Dorsolateral prefrontal cortex (tissue), 120 donors: ENCODE measurements at regions of chr1 and their contacts with region 1.

Region 1: GRCh38 chr1:223755992-223756775 is 43.8 kb downstream of the CAPN2 start:
- DNase-seq: peak in 9 of 10 donors; percentile 69 to 87 (median 81)
- H3K4me3 ChIP-seq: no peak overlapping the region
- H3K27ac ChIP-seq: peak overlapping the region; percentile 51 to 96 (median 87)
- H3K27me3 ChIP-seq: no peaks in the 10 kb centered on the region
- CTCF ChIP-seq: peak; percentile 17 to 89 (median 66)

Region 2: DNA sequence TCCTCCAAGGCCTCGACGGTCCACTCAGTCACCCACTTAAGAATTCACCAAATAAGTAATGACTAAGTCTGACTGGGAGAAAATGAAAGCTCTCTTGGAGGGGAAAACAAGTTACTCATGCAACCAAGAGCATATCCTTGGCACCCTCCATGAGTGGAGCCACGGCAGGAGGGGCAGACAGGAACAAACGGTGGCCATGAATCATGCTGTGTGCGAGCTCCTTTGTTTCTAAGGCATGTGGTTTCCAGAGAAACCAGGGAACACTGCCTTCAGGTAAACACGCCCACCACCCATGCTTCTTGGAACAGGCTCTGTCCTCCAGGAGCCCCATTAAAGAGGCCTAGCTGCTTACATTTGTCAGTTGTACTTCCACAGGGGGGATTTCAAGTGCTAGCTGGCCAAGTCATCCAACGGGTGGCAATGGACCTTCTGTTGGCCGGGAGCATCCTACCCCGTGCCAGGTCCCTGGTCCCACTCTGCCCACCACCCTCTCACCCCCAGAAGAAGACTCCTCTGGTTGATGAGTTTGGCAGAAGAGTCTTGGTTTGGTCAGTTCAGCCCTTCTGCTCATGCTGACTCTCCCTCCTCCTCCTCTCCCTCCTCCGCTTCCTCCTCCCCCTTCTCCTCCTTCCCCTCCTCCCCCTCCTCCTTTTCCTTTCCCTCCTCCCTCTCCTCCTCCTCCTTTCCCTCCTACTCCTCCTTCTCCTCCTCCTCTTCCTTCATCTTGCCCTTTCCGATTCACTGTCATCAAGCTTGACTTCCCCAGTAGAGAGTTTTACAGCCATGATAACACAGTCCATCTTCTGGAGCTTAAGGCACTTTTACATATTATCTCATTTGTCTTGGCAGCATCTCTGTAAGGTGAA is 255.4 kb before region 1 on chr1:
- intact Hi-C with region 1: no loop called
- DNase-seq: peak in 3 of 10 donors; percentile 18 to 64 (median 41)
- H3K4me3 ChIP-seq: no peak overlapping the region
- H3K27ac ChIP-seq: no peak overlapping the region
- H3K27me3 ChIP-seq: no peaks in the 10 kb centered on the region
- CTCF ChIP-seq: no peak

Region 3: GRCh38 chr1:223802602-223803001 is 46.4 kb after region 1 on chr1:
- intact Hi-C with region 1: loop called (anchors 2 kb)
- DNase-seq: peak in 1 of 10 donors; percentile 34
- H3K4me3 ChIP-seq: peak overlapping the region; percentile 11 to 73 (median 48)
- H3K27ac ChIP-seq: peak overlapping the region; percentile 13 to 95 (median 89)
- H3K27me3 ChIP-seq: no peaks in the 10 kb centered on the region
- CTCF ChIP-seq: peak in 44 of 56 donors; percentile 10 to 67 (median 33)